Activated naive CD4-positive, alpha-beta T cell treated with anti-CD3 and anti-CD28 coated beads, Interleukin-2, amount 10 ng/mL, durations not matched to agents 7 days and 5 days (primary cell): ENCODE measurements at regions of chr1 and their contacts with region 1.

Region 1: DNA sequence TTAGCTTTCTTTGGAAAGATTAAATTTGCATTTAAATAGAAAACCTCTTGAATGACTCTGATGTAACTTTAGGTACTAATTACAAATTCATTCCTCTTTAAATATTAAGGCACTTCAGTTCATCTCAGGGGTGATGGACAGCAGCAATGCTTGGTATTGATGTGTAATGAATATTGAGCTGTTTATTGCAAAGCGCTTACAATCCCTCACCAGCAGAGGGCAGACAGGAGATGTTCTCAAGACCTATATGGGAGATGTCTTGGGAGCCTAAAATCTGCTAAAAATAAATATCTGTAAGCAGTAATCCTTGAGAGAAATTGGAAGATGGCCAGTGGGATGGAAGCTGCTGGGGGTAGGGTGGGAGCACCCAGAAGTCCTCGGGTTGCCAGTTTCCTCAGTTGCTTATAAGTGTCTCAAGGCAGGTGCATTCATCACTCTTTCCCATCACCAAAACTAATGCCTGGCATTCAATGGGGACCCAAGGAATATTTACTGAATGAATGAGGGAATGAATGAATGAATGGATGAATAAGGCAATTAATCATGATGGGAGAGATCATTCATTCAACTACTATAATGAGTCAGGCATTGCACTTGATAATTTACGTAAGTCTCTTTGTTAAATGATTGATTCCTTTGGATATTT is 2.3 kb downstream of the KLHDC8A start:
- DNase-seq: peak; percentile 77
- H3K4me3 Mint-ChIP-seq: no peak overlapping the region
- H3K27ac Mint-ChIP-seq: no peak overlapping the region
- H3K4me1 Mint-ChIP-seq: no peaks in the 10 kb centered on the region
- H3K27me3 Mint-ChIP-seq: peaks cover 54% of the 10 kb centered on the region

Region 2: DNA sequence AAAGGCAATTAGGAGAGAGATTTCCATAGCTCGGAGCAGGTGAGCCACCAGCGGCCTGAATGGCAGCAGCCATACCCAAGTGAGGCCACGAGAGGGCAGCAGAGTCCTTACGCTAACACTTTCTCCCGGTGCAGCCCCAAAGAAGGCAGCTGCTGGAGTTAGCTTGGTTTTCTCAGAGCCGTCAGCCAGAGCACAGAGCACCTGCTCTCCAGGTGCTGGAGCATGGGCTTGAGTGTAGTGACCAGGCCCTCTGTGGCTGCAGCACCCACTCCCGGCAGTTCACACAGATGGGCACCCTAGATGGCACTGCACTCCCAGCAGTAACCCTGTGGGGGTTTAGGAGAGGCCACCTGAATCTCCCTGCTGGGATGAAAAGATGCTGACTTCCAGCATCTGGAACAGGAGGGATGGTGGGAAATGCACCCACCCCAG is 80.8 kb before region 1 on chr1:
- CTCF ChIA-PET with region 1: interaction called, 14 read pairs
- DNase-seq: peak; percentile 92
- H3K4me3 Mint-ChIP-seq: no peak overlapping the region
- H3K27ac Mint-ChIP-seq: peak overlapping the region; percentile 82
- H3K4me1 Mint-ChIP-seq: peaks cover 38% of the 10 kb centered on the region
- H3K27me3 Mint-ChIP-seq: peaks cover 26% of the 10 kb centered on the region

Region 3: DNA sequence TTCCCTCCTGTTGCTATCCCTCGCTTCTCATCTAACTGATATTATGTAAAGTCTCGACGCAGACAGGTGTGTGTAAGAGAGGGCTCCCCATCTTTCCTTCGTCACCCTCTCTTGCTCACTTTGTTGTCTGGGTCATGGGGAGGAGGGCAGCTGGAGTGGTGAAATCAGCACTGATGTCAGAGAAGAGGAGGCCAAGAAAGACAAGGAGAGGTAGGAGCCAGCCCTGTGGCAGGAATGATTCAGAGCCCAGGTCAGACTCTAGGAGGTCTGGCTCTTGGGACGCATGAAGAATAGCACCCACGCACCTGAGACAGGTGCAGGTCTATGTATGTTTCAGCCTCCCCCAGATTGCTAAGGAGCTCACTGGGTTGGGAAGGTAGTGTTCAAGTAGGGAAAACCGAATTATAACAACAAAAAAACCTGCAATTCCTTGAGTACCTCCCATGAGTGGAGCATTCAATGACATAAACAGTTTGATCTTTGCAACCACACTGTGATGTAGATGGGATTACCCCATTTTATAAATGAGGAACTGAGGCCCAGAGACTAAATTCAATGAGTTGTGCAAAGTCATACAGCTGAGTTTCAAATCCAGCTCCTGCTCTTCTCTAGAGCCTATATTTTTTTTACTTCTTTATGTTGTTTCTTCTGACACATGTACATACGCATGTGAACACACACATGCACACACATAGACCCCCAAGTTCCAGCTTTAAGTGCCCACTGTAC is 43.2 kb before region 1 on chr1:
- CTCF ChIA-PET with region 1: no interaction called
- DNase-seq: no peak
- H3K4me3 Mint-ChIP-seq: no peak overlapping the region
- H3K27ac Mint-ChIP-seq: no peak overlapping the region
- H3K4me1 Mint-ChIP-seq: peaks cover 72% of the 10 kb centered on the region
- H3K27me3 Mint-ChIP-seq: peaks cover 4% of the 10 kb centered on the region

Region 4: GRCh38 chr1:205335643-205336091 is 18.7 kb before region 1 on chr1:
- CTCF ChIA-PET with region 1: interaction called, 20 read pairs
- DNase-seq: peak; percentile 88
- H3K4me3 Mint-ChIP-seq: no peak overlapping the region
- H3K27ac Mint-ChIP-seq: no peak overlapping the region
- H3K4me1 Mint-ChIP-seq: no peaks in the 10 kb centered on the region
- H3K27me3 Mint-ChIP-seq: peaks cover 92% of the 10 kb centered on the region

Region 5: GRCh38 chr1:205365945-205366463 is 11.6 kb after region 1 on chr1:
- CTCF ChIA-PET with region 1: interaction called, 14 read pairs
- DNase-seq: no peak
- H3K4me3 Mint-ChIP-seq: no peak overlapping the region
- H3K27ac Mint-ChIP-seq: no peak overlapping the region
- H3K4me1 Mint-ChIP-seq: no peaks in the 10 kb centered on the region
- H3K27me3 Mint-ChIP-seq: peaks cover 33% of the 10 kb centered on the region

Region 6: DNA sequence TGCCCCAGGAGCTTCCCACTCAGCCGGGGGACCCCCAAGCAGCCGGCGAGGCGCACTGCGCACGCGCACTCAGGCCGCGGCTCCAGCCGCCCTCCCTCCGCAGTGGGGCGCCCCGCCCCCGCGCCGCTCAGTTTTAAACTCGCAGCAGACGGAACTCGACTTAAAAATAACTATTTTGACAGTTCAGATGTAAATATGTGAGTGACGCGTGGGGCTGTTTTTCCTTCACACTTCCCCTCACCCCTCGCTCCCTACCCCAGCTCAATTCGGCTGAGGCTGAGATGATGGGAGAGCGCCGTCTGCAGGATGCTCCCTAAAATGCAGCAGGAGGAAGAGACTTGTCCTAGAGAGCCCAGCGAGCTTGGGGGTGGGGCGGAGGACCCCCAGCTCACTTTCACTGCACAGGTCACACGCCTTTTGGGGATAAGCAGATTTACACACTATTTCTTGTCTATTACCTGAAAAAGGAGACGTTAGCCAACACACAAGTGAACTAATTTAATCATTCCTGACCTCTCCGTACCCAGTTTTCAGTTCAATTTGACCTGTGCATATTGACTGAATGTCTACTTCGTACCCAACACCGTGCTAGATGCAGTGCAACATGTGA is 76.4 kb after region 1 on chr1:
- CTCF ChIA-PET with region 1: interaction called, 20 read pairs
- DNase-seq: peak; percentile 71
- H3K4me3 Mint-ChIP-seq: peak overlapping the region; percentile 74
- H3K27ac Mint-ChIP-seq: peak overlapping the region; percentile 26
- H3K4me1 Mint-ChIP-seq: peaks cover 9% of the 10 kb centered on the region
- H3K27me3 Mint-ChIP-seq: peaks cover 82% of the 10 kb centered on the region

Region 7: DNA sequence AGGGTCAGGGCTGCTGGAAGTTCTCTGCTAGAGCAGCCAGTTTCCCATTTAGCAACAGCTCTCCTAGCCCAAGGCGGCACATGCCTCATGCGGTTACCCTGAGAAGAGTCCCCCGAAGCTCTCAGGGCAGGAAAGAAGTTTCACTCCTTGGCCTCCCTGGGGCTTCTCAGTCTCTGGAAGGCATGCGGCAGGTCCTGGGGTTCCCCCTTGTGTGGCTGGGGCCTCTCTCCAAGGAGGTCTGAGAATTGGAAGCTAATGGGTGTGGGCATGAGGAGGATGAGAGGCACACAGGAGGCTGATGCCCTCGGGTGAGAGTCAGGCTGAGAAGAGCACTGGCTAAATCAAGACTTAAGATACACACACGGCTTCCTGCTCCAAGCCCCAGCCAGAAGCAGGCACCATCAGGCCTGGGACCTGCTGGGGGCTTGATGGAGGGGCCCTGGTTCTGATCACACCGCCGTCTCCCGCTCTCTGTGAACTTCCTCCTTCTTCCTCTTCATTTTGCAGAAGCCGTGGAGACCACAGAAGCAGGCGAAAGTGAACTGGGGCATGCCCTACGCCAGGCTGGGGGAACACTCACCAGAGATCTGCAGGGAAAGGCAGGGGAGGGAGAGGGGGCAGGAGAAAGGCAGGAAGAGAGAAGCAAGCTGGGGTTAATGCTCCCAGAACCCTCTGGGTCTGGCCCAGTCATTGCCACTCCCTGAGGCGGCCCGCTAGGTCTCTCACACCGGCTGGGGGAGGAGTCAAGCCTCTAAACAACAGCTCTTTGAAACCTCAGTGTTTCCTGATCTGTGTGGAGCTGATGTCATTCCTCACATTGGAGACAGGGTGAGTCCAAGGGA is 86.3 kb after region 1 on chr1:
- CTCF ChIA-PET with region 1: interaction called, 12 read pairs
- DNase-seq: peak; percentile 87
- H3K4me3 Mint-ChIP-seq: peak overlapping the region; percentile 71
- H3K27ac Mint-ChIP-seq: peak overlapping the region; percentile 93
- H3K4me1 Mint-ChIP-seq: peaks cover 26% of the 10 kb centered on the region
- H3K27me3 Mint-ChIP-seq: peaks cover 51% of the 10 kb centered on the region